BJ (cell line): ENCODE measurements at regions of chr14 and their contacts with region 1.

Region 1: GRCh38 chr14:75417674-75418073 is 10.1 kb upstream of the JDP2 start:
- DNase-seq: no peak
- H3K4me3 ChIP-seq: no peak overlapping the region
- H3K27me3 ChIP-seq: peaks cover 1% of the 10 kb centered on the region; the same call in 1 of the 2 replicates
- CTCF ChIP-seq: no peak

Region 2: GRCh38 chr14:75433631-75434071 is 16.0 kb after region 1 on chr14:
- CTCF ChIA-PET with region 1: interaction called, 4 read pairs
- POLR2A ChIA-PET with region 1: interaction called, 14 read pairs
- DNase-seq: peak; percentile 40
- H3K4me3 ChIP-seq: no peak overlapping the region
- H3K27me3 ChIP-seq: no peaks in the 10 kb centered on the region
- CTCF ChIP-seq: no peak